Mammary epithelial cell (primary cell): ENCODE measurements at regions of chr1 and their contacts with region 1.

Region 1: DNA sequence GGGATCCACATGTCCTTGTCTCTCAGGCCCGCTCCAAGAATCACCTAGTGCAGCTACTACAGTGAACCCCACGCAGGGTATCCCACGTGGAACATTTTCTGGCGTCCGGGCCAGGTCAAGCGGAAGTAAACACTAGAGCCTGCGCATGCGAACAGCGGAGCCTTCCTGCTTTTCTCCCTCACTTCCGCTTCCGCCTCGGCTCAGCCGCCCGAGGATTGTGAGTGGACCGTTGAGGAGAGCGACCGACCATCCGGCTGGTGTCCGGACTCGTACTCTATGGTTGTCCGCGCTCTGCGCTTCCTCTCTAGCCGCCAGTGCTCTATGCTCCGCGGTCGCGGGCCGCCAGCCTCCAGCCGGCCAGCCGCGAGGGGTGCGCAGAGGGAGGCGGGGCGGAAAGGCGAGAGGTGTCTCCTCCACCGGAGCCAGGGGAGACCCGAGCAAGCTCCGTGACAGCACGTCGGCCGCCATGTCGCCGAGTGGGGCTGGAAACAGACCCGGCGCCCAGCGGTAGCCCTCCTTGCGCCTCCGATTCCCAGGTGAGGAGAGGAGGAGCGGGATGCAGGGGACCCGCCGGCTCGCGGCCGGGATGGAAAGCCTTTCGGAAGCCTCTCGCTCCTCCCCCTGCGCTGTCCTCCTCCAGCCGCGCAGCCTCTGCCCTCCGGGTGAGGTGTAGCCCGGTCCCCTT is at the starts of genes CNST and TFB2M:
- DNase-seq: peak; percentile 99
- H3K4me3 ChIP-seq: peak within 1 kb of the TSS; percentile 76 to 99 (median 99)
- H3K27ac ChIP-seq: peak within 1 kb of the TSS; percentile 70
- H3K4me1 ChIP-seq: peaks cover 8% of the 10 kb centered on the region
- H3K27me3 ChIP-seq: no peaks in the 10 kb centered on the region
- CTCF ChIP-seq: no peak
- total RNA-seq, gene CNST: 12.0 to 14.9 TPM
- total RNA-seq, gene TFB2M: 13.8 to 16.0 TPM

Region 2: DNA sequence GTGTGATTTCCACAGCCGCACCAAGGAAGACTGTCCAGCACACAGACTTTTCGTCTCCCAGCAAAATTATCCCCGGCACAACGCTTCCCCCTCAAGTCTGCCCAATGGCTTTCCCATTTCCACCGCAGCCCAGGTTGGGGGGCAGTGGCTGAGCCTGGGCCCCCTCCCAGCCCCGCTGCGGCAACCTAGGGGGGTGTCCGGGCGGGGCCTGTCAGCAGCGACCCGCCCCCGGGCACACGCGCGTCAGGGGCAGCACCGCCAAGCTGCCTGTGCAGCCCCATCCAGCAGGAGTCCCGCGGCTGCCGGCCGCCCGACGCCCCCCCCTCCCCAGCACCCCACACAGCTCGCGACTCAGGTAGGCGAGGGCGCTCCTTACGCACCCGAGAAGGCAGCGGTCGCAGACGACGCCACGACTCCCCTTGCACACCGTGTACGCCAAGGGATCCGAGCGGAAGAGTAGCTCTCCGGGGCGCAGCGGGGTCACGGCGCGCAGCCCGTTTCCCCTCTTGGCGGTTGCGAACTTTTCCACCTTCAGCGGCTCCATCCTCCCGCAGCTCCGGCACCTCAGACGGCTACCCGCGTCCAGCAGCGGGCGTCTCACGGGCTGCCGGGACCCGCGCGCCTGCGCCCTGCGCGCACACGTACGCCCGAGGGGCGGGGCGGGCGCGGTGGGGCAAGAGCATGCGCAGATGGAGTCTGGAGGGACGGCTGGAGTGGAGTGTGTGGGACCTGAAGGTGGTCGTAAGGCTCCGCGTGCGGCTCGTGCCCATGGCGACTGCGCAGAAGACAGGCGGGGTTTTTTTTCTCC is 59.4 kb before region 1 on chr1 and contains the start of gene SMYD3:
- CTCF ChIA-PET with region 1: no interaction called
- dilution Hi-C with region 1: no loop called
- in situ Hi-C with region 1: no loop called
- intact Hi-C with region 1: loop called (anchors 2 kb)
- DNase-seq: peak; percentile 73
- H3K4me3 ChIP-seq: peak within 1 kb of the TSS; percentile 59 to 95 (median 77)
- H3K27ac ChIP-seq: peak within 1 kb of the TSS; percentile 1
- H3K4me1 ChIP-seq: peaks cover 26% of the 10 kb centered on the region
- H3K27me3 ChIP-seq: no peaks in the 10 kb centered on the region
- CTCF ChIP-seq: no peak
- total RNA-seq, gene SMYD3: 16.5 to 23.5 TPM

Region 3: GRCh38 chr1:246608616-246609376 is 42.5 kb after region 1 on chr1:
- CTCF ChIA-PET with region 1: no interaction called
- dilution Hi-C with region 1: no loop called
- in situ Hi-C with region 1: no loop called
- intact Hi-C with region 1: loop called (anchors 2 kb)
- DNase-seq: peak; percentile 85
- H3K4me3 ChIP-seq: no peak overlapping the region
- H3K27ac ChIP-seq: no peak overlapping the region
- H3K4me1 ChIP-seq: peaks cover 20% of the 10 kb centered on the region
- H3K27me3 ChIP-seq: no peaks in the 10 kb centered on the region
- CTCF ChIP-seq: peak in 1 of 2 donors; percentile 37

Region 4: DNA sequence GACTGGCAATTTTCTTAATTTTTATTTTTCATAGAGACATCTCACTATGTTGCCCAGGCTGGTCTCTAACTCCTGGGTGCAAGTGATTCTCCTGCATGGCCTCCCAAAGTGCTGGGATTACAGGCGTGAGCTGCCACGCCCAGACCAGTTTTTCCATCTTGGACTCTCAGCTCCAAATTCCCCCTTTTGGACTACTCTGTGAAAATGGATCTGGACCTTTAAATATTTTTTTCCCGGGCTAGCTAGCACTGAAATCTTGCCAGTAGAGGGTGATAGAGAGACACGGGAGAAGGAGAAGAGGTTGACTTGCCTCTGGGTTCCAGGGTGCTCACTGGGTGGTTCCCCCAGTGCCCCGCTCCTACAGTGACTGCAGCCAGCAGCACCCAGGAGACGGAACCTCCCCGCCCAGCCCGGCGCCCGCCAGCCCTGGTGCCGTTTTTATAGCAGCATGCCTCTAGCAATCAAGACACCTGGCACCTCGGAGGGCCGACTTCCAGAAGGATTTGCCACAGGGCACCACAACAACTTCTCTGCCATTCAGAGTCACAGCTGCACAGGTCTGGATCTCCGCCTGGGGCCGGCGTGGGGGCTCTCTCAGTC is 123.2 kb after region 1 on chr1:
- CTCF ChIA-PET with region 1: interaction called, 4 read pairs
- dilution Hi-C with region 1: no loop called
- in situ Hi-C with region 1: no loop called
- intact Hi-C with region 1: loop called (anchors 1 kb)
- DNase-seq: peak; percentile 76
- H3K4me3 ChIP-seq: peak overlapping the region; percentile 45 to 60 (median 50)
- H3K27ac ChIP-seq: no peak overlapping the region
- H3K4me1 ChIP-seq: peaks cover 5% of the 10 kb centered on the region
- H3K27me3 ChIP-seq: no peaks in the 10 kb centered on the region
- CTCF ChIP-seq: peak; percentile 87 to 90